A673 (cell line): ENCODE measurements at regions of chr6 and their contacts with region 1.

Region 1: DNA sequence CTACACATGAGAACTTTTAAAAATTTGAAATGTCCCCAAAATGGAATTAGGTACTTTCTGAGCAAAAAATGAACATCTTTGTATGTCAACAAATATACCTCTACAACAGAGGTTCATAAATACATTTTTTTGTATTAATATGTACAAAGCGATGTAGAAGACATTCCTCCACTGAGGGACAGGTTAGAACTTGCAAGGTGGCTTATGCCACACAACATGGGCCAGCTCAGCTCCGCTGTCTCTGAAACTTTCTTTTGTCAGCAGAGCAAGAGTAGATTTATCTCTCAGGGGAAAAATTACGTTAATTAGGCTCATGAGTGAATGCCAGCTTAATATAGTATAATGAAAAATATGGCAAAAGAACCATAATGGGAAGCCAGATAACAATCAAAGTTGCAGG is 10.6 kb upstream of the TMEM242 start:
- DNase-seq: no peak
- H3K4me3 ChIP-seq: no peak overlapping the region
- H3K27ac ChIP-seq: no peak overlapping the region
- H3K4me1 ChIP-seq: no peaks in the 10 kb centered on the region
- H3K27me3 ChIP-seq: no peaks in the 10 kb centered on the region
- CTCF ChIP-seq: no peak

Region 2: GRCh38 chr6:157323255-157323965 is 10.5 kb before region 1 on chr6 and contains the start of gene TMEM242:
- CTCF ChIA-PET with region 1: interaction called, 10 read pairs
- POLR2A ChIA-PET with region 1: no interaction called
- intact Hi-C with region 1: no loop called
- DNase-seq: peak; percentile 95
- H3K4me3 ChIP-seq: peak within 1 kb of the TSS; percentile 73
- H3K27ac ChIP-seq: peak within 1 kb of the TSS; percentile 79
- H3K4me1 ChIP-seq: peaks cover 9% of the 10 kb centered on the region
- H3K27me3 ChIP-seq: no peaks in the 10 kb centered on the region
- CTCF ChIP-seq: peak; percentile 38; the same call in 1 of the 2 replicates
- total RNA-seq, gene TMEM242: 13.2 and 13.5 TPM in 2 replicates

Region 3: DNA sequence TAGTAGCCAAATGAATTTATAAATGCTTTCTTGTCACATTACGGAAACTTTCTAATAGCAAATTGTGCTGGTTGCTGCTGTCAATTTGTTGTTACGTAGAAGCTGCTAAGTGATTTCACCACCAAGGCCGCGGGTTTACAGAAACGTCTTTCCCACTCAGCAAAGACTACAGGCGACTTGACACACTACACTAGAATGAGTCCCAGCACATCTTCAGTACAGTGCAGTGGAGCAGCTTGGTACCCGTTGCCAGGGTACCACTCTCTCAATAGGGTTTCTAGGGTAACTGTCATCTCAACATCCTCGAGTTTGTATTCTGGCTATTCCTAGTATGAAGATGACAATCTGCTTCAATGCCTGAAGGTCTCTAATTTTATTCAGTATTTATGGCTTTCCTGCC is 24.3 kb after region 1 on chr6:
- CTCF ChIA-PET with region 1: no interaction called
- POLR2A ChIA-PET with region 1: interaction called, 12 read pairs
- intact Hi-C with region 1: no loop called
- DNase-seq: no peak
- H3K4me3 ChIP-seq: no peak overlapping the region
- H3K27ac ChIP-seq: no peak overlapping the region
- H3K4me1 ChIP-seq: no peaks in the 10 kb centered on the region
- H3K27me3 ChIP-seq: peaks cover 19% of the 10 kb centered on the region
- CTCF ChIP-seq: no peak

Region 4: DNA sequence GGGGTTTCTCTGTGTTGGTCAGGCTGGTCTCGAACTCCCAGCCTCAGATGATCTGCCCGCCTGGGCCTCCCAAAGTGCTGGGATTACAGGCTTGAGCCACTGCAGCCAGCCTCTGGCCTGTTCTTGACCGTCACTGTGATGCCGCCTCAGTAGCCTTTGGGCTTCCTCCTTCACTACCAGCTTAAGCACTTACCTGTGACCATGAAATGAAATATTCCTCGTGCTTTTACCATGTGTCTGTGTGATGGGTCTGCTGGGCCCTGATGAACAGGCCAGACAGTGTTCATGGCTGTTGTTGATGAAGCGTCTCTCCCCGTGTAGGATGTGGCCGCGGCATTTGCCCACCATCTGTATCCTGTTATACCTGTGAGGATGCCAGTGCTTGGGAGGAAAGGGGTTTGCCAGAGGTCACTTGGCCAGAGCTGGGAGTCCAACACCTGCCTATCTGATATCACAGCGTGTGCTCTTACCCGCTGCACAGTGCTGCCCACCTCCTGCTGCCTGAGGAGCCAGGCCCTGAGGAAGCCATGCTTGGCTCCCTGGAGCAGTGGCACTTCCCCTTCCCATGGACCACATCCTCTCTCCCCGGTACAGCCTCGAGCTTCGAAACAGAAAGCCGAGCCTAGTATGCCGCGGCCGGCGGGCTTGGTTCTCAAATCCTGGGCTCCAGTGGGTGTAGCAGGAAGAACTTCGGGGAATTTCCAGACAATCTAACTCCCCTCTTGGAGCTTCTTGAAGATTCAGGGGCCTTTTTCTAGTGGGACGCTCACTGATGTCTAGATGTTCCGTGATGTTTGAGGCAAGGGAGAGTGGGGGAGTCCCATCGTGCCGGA is 214.9 kb after region 1 on chr6:
- CTCF ChIA-PET with region 1: no interaction called
- POLR2A ChIA-PET with region 1: no interaction called
- intact Hi-C with region 1: no loop called
- DNase-seq: no peak
- H3K4me3 ChIP-seq: no peak overlapping the region
- H3K27ac ChIP-seq: no peak overlapping the region
- H3K4me1 ChIP-seq: peaks cover 3% of the 10 kb centered on the region
- H3K27me3 ChIP-seq: no peaks in the 10 kb centered on the region
- CTCF ChIP-seq: no peak